Activated naive CD4-positive, alpha-beta T cell treated with anti-CD3 and anti-CD28 coated beads for 36 hours (primary cell): ENCODE measurements at regions of chr18 and their contacts with region 1.

Region 1: GRCh38 chr18:67199993-67200617 is 316.4 kb downstream of the DSEL start:
- DNase-seq: no peak
- H3K4me3 Mint-ChIP-seq: no peak overlapping the region
- H3K27ac Mint-ChIP-seq: no peak overlapping the region
- H3K4me1 Mint-ChIP-seq: peaks cover under 1% of the 10 kb centered on the region
- H3K27me3 Mint-ChIP-seq: peaks cover 5% of the 10 kb centered on the region

Region 2: DNA sequence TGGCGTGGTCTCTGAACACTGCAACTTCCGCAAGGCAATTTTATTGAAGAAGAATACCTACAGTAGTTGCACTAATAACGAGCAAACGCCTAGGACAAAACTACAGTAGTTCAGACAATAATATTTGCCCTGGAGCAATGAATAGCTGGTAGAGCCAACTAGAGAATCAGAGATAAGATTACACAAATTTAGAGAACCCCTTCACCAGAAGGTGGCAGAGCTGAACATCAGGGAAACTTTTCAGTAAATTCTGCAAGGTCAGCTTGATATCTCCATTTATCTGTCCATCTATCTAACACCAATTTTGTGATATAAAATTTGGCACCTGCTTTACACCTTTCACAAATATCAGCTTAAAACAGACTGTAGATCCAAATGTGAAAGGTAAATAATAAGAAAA is 640.0 kb before region 1 on chr18:
- CTCF ChIA-PET with region 1: no interaction called
- intact Hi-C with region 1: loop called (anchors 5 kb)
- DNase-seq: no peak
- H3K4me3 Mint-ChIP-seq: no peak overlapping the region
- H3K27ac Mint-ChIP-seq: no peak overlapping the region
- H3K4me1 Mint-ChIP-seq: no peaks in the 10 kb centered on the region
- H3K27me3 Mint-ChIP-seq: no peaks in the 10 kb centered on the region

Region 3: GRCh38 chr18:67104700-67105284 is 95.3 kb before region 1 on chr18:
- CTCF ChIA-PET with region 1: interaction called, 32 read pairs
- intact Hi-C with region 1: loop called (anchors 1 kb)
- DNase-seq: peak; percentile 65
- H3K4me3 Mint-ChIP-seq: no peak overlapping the region
- H3K27ac Mint-ChIP-seq: no peak overlapping the region
- H3K4me1 Mint-ChIP-seq: no peaks in the 10 kb centered on the region
- H3K27me3 Mint-ChIP-seq: peaks cover 3% of the 10 kb centered on the region

Region 4: GRCh38 chr18:67183398-67183797 is 16.7 kb before region 1 on chr18:
- CTCF ChIA-PET with region 1: no interaction called
- intact Hi-C with region 1: no loop called
- DNase-seq: no peak
- H3K4me3 Mint-ChIP-seq: no peak overlapping the region
- H3K27ac Mint-ChIP-seq: no peak overlapping the region
- H3K4me1 Mint-ChIP-seq: no peaks in the 10 kb centered on the region
- H3K27me3 Mint-ChIP-seq: peaks cover 15% of the 10 kb centered on the region

Region 5: DNA sequence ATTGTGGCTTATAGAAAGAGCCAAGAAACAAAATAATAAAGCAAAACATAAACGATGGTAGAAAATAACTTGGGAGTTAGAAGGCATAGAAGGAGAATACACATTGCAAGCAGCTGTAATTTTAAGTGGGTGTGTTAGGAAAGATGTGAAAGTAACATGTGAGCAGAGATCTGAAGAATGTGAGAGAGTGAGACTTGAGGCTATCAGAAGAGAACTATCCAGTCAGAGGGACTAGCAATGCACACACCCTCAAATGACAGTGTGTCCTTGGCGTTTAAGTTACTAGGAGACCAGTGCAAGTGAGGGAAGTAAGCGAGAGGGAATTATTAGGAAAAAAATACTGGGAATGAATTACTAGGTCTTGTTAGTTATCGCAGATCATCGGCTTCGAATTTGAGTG is 11.5 kb after region 1 on chr18:
- CTCF ChIA-PET with region 1: no interaction called
- intact Hi-C with region 1: no loop called
- DNase-seq: no peak
- H3K4me3 Mint-ChIP-seq: no peak overlapping the region
- H3K27ac Mint-ChIP-seq: no peak overlapping the region
- H3K4me1 Mint-ChIP-seq: no peaks in the 10 kb centered on the region
- H3K27me3 Mint-ChIP-seq: no peaks in the 10 kb centered on the region

Region 6: GRCh38 chr18:67400502-67401117 is 200.5 kb after region 1 on chr18:
- CTCF ChIA-PET with region 1: no interaction called
- intact Hi-C with region 1: no loop called
- DNase-seq: no peak
- H3K4me3 Mint-ChIP-seq: no peak overlapping the region
- H3K27ac Mint-ChIP-seq: no peak overlapping the region
- H3K4me1 Mint-ChIP-seq: peaks cover 6% of the 10 kb centered on the region
- H3K27me3 Mint-ChIP-seq: peaks cover 18% of the 10 kb centered on the region